ENCODE measurements at regions of chr5 and their contacts with region 1.

Region 1: GRCh38 chr5:139755892-139756671 is 39.5 kb upstream of the PSD2 start:
- DNase-seq: no peak
- ATAC-seq: peak in 2 of 4 donors; percentile 14 to 21
- H3K4me3 ChIP-seq: no peak overlapping the region
- H3K27ac ChIP-seq: no peak overlapping the region
- H3K4me1 ChIP-seq: peaks cover 0 to 4% (median under 1%) of the 10 kb centered on the region in 4 donors
- H3K27me3 ChIP-seq: peaks cover 0 to 5% of the 10 kb centered on the region in 2 donors
- CTCF ChIP-seq: no peak
- POLR2A ChIP-seq: no peak

Region 2: GRCh38 chr5:139551191-139551889 is 204.7 kb before region 1 on chr5:
- intact Hi-C with region 1: no loop called
- DNase-seq: no peak
- ATAC-seq: no peak
- H3K4me3 ChIP-seq: no peak overlapping the region
- H3K27ac ChIP-seq: no peak overlapping the region
- H3K4me1 ChIP-seq: peaks cover 0 to 5% (median 0%) of the 10 kb centered on the region in 4 donors
- H3K27me3 ChIP-seq: no peaks in the 10 kb centered on the region
- CTCF ChIP-seq: no peak
- POLR2A ChIP-seq: no peak

Region 3: DNA sequence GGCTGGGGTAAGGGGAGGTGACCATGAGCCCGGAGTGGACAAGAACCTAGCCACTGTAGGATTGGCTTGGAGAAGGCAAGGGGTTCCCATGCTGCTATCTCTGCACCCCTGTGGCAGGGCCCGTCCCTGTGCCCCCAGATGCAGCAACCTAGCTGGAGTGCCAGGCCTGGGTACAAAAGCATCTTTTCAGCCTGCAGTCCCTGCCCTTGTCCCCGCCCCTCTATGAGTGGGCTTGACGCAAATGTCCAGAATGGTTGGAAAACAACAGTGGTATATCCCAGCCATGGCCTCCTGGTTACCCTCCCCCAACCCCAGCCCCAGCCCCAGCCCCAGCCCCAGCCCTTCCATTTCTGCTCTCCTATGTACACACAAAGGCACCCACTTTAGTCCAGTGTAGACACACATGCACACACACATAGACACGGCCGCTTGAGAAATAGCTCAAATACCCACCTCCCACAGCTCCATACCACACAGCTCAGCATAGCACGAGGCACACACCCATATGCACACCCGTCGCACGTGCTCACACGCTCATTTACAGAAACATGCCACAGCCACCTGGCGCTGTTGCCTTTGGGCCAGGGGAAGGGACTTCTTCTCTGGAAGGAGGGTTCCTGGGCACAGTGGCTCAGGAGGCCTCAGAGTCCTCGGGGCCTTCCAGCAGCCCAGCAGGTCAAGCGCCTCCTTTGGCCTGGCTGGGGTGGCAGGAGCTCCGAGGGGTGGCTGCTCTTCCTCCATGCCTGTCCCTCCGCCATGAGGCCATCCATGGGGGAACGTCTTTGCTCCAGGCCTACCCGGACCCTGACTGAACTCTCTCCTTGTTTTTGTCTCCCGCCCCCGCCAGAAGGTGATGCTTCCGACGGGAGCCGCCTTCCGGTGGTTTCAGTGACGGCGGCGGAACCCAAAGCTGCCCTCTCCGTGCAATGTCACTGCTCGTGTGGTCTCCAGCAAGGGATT is 73.8 kb before region 1 on chr5:
- intact Hi-C with region 1: no loop called
- DNase-seq: no peak
- ATAC-seq: no peak
- H3K4me3 ChIP-seq: no peak overlapping the region
- H3K27ac ChIP-seq: no peak overlapping the region
- H3K4me1 ChIP-seq: peaks cover 0 to 48% (median 24%) of the 10 kb centered on the region in 4 donors
- H3K27me3 ChIP-seq: no peaks in the 10 kb centered on the region
- CTCF ChIP-seq: no peak
- POLR2A ChIP-seq: no peak

Region 4: DNA sequence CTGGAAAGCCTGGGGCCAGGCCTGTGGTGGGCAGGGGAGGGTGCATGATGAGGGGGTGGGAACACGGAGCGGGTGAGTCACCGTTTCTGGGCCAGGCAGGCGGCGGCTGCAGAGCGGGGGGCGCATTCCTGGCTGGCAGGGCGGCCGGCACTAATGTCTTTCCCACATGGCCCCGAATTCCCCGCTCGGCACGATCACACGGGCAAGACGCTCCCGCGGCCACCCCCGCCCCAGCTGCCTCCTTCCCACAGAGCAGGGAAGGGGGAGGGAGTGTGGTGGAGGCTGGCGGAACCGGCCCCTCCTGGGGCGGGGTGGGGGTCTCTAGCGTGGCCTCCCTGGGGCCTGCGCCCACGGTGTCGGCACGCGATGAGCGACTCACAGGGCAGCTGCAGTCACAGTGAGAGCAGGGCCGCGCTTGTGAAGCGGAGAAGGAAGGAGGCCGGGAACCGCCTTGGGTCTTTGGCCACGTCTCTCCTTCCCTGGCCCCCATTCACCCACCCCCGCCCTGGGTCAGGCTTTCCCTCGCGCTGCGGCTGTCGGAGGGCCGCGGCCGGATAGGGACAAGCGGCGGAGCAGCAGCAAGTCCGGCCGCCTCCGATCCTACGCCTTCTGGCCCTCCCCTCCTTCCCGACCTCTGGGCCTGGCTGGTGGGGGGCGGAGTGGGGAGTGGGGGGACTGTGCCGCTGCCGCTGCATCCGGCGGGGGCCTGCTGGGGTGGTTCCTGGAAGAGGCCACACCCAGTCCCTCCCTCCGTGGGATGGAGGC is 59.0 kb before region 1 on chr5:
- intact Hi-C with region 1: loop called (anchors 10 kb)
- DNase-seq: peak in 1 of 3 donors; percentile 73
- ATAC-seq: peak; percentile 29 to 59 (median 46)
- H3K4me3 ChIP-seq: peak overlapping the region in 1 of 3 donors; percentile 19
- H3K27ac ChIP-seq: peak overlapping the region; percentile 33 to 63 (median 47)
- H3K4me1 ChIP-seq: peaks cover 0 to 31% (median 5%) of the 10 kb centered on the region in 4 donors
- H3K27me3 ChIP-seq: no peaks in the 10 kb centered on the region
- CTCF ChIP-seq: no peak
- POLR2A ChIP-seq: no peak

Region 5: DNA sequence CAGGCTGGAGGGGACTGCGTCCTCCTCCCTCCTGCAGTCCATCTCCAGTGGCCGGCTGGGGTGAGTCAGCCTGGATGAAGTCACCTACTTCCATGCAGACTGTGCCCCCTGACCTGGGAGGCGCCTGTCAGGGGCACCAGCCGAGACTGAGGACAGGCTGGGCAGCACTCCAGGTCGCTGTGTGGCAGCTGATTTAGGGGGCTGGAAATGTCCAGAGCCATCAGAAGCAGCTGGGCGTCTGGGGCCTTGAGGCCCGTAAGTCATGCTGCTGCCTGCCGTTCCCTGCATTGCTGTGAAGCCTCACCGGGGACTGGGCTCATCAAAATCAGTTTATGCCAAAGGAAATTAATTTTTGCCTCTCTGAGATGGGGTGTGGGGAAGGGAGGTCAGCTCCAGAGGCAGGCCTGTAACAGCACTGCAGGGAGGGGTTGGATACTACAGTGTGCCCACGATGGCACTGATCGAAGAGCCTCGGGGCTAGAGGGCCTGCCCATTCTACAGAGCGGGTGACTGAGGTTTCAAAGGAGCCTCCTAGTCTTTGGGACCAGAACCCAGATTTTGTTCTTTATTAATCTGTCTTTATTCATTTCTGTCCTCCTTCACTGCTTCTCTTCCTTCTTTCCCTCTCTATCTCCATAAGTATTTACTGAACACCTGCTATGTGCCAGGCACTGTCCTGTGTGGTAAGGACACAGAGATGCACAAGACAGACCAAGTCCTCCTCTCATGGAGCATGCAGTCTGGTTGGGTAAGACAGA is 30.8 kb before region 1 on chr5:
- intact Hi-C with region 1: no loop called
- DNase-seq: peak in 1 of 3 donors; percentile 74
- ATAC-seq: peak in 3 of 4 donors; percentile 50 to 98 (median 65)
- H3K4me3 ChIP-seq: no peak overlapping the region
- H3K27ac ChIP-seq: no peak overlapping the region
- H3K4me1 ChIP-seq: no peaks in the 10 kb centered on the region
- H3K27me3 ChIP-seq: no peaks in the 10 kb centered on the region
- CTCF ChIP-seq: no peak
- POLR2A ChIP-seq: no peak

Region 6: DNA sequence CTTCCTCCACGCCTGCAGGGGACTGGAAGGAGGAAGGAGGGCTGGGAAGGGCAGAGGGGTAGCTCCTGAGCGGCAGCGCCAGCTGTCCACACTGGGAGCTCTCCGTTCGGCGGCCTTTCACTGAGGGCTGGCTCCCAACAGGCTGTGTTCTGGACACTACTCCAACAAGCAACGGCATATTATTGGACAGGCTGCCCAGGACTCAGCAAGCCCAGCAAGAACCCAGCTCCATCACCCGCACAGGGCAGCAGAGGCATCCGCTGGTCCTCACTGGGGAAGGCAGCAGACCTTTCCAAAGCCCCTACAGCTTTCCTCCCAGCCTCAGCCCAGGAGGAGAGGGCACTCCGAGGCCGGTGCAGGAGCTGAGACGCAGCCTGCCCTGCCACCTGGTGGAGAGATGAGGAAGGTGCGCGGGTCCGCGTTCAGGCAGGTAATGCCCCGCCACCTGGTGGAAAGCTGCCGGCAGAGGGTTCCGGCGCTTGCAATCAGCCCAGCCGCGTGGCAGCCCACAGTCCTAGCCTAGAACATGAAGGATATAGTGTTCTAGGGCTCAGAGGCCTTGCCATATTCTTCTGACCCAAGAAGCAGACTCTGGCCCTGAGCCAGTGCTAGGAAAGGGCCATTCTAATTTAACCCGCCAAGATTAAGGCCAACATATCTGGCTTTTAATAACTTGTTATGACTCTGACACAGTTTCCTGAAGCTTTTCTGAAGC is 212.6 kb after region 1 on chr5:
- intact Hi-C with region 1: no loop called
- DNase-seq: peak; percentile 89
- ATAC-seq: peak; percentile 100
- H3K4me3 ChIP-seq: no peak overlapping the region
- H3K27ac ChIP-seq: no peak overlapping the region
- H3K4me1 ChIP-seq: no peaks in the 10 kb centered on the region
- H3K27me3 ChIP-seq: no peaks in the 10 kb centered on the region
- CTCF ChIP-seq: peak; percentile 100
- POLR2A ChIP-seq: no peak

Measured in right lobe of liver (tissue), 6 donors.